Gastrocnemius medialis (tissue), 4 donors: ENCODE measurements at regions of chr2 and their contacts with region 1.

Region 1: GRCh38 chr2:216692636-216693413 is 2.5 kb downstream of the IGFBP5 start:
- DNase-seq: peak; percentile 77 to 90
- ATAC-seq: peak; percentile 54 to 58
- H3K4me3 ChIP-seq: peak overlapping the region; percentile 74 to 95 (median 78)
- H3K27ac ChIP-seq: peak overlapping the region; percentile 93 to 95 (median 93)
- H3K4me1 ChIP-seq: peaks cover 74% of the 10 kb centered on the region in 2 donors
- H3K27me3 ChIP-seq: no peaks in the 10 kb centered on the region
- CTCF ChIP-seq: no peak
- POLR2A ChIP-seq: peak; percentile 29 to 54

Region 2: GRCh38 chr2:216679221-216680019 is 13.4 kb before region 1 on chr2:
- in situ Hi-C with region 1: no loop called
- intact Hi-C with region 1: loop called (anchors 1 kb)
- DNase-seq: peak; percentile 84 to 92
- ATAC-seq: peak; percentile 58 to 59
- H3K4me3 ChIP-seq: peak overlapping the region in 2 of 4 donors; percentile 8 to 26
- H3K27ac ChIP-seq: peak overlapping the region; percentile 93 to 95 (median 93)
- H3K4me1 ChIP-seq: peaks cover 55 to 57% of the 10 kb centered on the region in 2 donors
- H3K27me3 ChIP-seq: no peaks in the 10 kb centered on the region
- CTCF ChIP-seq: no peak
- POLR2A ChIP-seq: peak; percentile 54 to 55